BJ (cell line): ENCODE measurements at regions of chr5 and their contacts with region 1.

Region 1: DNA sequence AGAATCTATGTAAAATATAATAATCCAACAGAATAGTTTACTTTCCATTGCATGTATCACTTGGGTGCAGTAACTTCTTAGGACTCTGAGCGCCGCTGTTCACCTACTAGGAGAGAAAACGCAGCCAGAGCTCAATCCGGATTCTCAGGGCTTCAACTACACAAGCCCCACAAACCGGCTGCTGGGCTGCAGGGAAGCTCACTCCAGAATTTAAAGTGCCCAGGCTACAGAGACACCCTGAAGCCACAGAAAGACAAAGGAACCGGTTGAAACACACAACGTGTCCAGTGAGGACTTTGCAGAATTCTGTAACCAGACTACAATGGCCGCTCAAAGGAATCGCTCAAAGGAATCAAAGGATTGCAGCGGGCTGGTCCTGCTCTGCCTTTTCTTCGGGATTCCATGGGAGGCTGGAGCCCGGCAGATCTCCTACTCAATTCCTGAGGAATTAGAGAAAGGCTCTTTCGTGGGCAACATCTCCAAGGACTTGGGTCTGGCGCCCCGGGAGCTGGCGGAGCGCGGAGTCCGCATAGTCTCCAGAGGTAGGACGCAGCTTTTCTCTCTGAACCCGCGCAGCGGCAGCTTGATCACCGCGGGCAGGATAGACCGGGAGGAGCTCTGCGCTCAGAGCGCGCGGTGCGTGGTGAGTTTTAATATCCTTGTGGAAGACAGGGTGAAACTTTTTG is at the start of gene PCDHGA10:
- DNase-seq: no peak
- H3K4me3 ChIP-seq: peak within 1 kb of the TSS; percentile 33
- H3K27me3 ChIP-seq: no peaks in the 10 kb centered on the region
- CTCF ChIP-seq: peak; percentile 67
- polyA plus RNA-seq, gene PCDHGA10: 2.7 and 3.9 TPM in 2 replicates

Region 2: GRCh38 chr5:141369994-141370848 is 42.8 kb before region 1 on chr5 and contains the start of gene PCDHGB3:
- CTCF ChIA-PET with region 1: interaction called, 13 read pairs
- POLR2A ChIA-PET with region 1: no interaction called
- DNase-seq: no peak
- H3K4me3 ChIP-seq: peak within 1 kb of the TSS; percentile 24
- H3K27me3 ChIP-seq: no peaks in the 10 kb centered on the region; the same call in none of the 2 replicates
- CTCF ChIP-seq: peak; percentile 61
- polyA plus RNA-seq, gene PCDHGB3: 2.7 and 3.0 TPM in 2 replicates

Region 3: DNA sequence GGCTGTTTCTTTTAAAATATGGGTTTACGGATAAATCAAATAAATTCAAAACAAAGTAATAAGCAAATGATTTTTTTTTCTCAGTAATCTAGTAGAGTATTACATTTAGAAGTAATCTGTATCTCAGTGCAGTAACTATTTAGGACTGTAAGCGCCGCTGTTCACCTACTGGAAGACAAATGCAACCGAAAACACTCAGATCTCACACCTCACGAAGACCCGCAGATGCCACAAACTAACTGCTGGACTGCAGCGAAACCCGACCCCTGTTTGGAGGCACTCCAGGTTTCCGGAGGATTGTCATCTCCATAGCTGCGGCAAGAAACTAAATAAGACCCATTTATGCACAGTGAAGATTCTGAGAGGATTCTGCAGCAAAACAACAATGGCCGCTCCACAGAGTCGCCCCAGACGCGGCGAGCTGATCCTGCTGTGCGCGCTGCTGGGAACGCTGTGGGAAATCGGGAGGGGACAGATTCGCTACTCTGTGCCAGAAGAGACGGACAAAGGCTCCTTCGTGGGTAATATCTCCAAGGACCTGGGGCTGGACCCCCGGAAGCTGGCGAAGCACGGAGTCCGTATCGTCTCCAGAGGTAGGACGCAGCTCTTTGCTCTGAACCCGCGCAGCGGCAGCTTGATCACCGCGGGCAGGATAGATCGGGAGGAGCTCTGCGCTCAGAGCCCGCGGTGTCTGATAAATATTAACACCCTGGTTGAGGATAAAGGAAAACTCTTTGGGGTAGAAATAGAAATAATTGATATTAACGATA is 20.4 kb before region 1 on chr5 and contains the start of gene PCDHGA8:
- CTCF ChIA-PET with region 1: interaction called, 19 read pairs
- POLR2A ChIA-PET with region 1: no interaction called
- DNase-seq: no peak
- H3K4me3 ChIP-seq: peak within 1 kb of the TSS; percentile 14; the same call in 1 of the 2 replicates
- H3K27me3 ChIP-seq: no peaks in the 10 kb centered on the region
- CTCF ChIP-seq: 0 out of 2 replicates have a peak, but pooled peaks have one; percentile 18
- polyA plus RNA-seq, gene PCDHGA8: 0.72 and 0.77 TPM in 2 replicates

Region 4: DNA sequence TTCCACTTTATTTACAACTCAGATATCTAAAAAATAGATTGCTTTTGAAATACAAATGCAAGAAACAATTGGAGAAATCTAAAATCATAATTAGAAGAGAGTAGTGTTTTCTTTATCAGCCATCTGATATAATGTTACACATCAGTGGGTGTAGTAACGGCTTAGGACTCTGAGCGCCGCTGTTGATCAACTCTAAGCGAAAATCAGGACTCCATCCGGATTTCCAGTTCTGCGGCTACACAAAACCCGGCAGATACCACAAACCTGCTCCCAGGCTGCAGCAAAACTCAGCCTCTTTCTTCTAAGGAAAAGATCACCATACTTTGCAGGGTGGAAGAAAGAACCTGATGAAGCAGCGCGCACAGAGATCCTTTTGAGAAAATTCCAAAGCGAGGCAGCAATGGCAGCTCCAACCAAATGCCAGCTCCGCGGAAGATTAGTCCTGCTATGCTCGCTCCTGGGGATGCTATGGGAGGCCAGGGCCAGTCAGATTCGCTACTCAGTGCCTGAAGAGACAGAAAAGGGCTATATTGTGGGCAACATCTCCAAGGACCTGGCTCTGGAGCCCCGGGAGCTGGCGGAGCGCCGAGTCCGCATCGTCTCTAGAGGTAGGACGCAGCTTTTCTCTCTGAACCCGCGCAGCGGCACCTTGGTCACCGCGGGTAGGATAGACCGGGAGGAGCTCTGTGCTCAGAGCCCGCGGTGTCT is 10.3 kb before region 1 on chr5 and contains the start of gene PCDHGA9:
- CTCF ChIA-PET with region 1: interaction called, 11 read pairs
- POLR2A ChIA-PET with region 1: no interaction called
- DNase-seq: no peak
- H3K4me3 ChIP-seq: no peak within 1 kb of the TSS
- H3K27me3 ChIP-seq: no peaks in the 10 kb centered on the region
- CTCF ChIP-seq: peak; percentile 35; the same call in 1 of the 2 replicates
- polyA plus RNA-seq, gene PCDHGA9: 0.97 and 1.2 TPM in 2 replicates